Activated CD8-positive, alpha-beta T cell treated with anti-CD3 and anti-CD28 coated beads, Interleukin-2, amount 10 ng/mL, durations not matched to agents 7 days and 5 days (primary cell): ENCODE measurements at regions of chr1 and their contacts with region 1.

Region 1: GRCh38 chr1:45490626-45491486 is at the start of gene TESK2:
- DNase-seq: peak; percentile 98
- ATAC-seq: peak; percentile 99
- H3K4me3 Mint-ChIP-seq: no peak within 1 kb of the TSS
- H3K27ac Mint-ChIP-seq: no peak within 1 kb of the TSS
- H3K4me1 Mint-ChIP-seq: peaks cover 12% of the 10 kb centered on the region
- H3K27me3 Mint-ChIP-seq: peaks cover 5% of the 10 kb centered on the region
- total RNA-seq, gene TESK2: 3.3 to 3.5 TPM

Region 2: DNA sequence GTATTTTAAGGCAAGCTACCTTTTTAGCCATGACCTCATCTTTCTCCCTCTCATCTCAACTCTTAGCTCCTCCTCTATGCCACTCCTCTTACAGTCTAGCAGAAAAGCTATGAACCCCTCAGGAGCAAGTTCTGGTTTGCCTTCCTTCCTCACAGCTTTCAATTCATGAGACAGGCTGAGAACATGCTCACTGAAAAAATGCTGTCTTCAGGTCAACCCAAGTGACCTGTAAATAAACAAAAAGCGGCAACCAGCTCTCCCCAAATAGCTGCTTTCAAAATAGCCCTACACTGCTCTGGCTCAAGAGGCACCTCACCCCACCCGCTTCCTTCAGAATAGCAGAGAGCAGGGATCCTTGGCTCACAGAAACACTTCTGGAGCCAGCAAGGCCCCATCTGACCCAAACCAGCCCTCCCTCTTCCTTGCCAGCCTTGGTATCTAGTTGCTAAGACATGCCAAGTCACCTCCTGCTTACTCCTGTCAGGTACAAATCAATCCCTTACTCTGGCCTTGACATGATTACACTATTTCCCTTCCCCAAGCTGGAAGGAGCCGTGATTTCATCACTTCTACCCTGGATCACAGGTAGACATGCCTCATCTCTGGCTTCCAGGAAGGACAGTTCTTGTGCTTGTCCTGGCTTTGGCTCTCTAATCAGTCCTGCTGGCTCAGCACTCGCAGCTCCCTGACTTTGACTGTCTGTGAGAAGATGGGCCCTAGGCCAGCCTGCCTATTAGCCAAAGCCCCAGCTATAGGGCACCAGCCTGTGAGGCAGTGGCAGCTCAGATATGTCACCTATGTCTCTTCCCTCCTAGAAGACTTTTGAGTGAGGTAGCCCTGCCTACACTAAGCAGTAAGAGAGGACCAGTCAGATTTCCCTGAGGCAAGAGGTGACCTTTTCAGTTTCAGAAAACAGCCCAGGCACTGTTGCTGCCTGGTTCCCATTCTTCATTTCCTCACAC is 141.9 kb before region 1 on chr1:
- CTCF ChIA-PET with region 1: interaction called, 218 read pairs
- POLR2A ChIA-PET with region 1: interaction called, 3 read pairs
- DNase-seq: no peak
- ATAC-seq: no peak
- H3K4me3 Mint-ChIP-seq: no peak overlapping the region
- H3K27ac Mint-ChIP-seq: peak overlapping the region; percentile 60
- H3K4me1 Mint-ChIP-seq: peaks cover 27% of the 10 kb centered on the region
- H3K27me3 Mint-ChIP-seq: no peaks in the 10 kb centered on the region

Region 3: GRCh38 chr1:45785583-45785982 is 294.7 kb after region 1 on chr1:
- CTCF ChIA-PET with region 1: no interaction called
- POLR2A ChIA-PET with region 1: no interaction called
- DNase-seq: peak; percentile 77
- ATAC-seq: peak; percentile 100
- H3K4me3 Mint-ChIP-seq: peak overlapping the region; percentile 62
- H3K27ac Mint-ChIP-seq: peak overlapping the region; percentile 67
- H3K4me1 Mint-ChIP-seq: peaks cover 28% of the 10 kb centered on the region
- H3K27me3 Mint-ChIP-seq: peaks cover 43% of the 10 kb centered on the region

Region 4: DNA sequence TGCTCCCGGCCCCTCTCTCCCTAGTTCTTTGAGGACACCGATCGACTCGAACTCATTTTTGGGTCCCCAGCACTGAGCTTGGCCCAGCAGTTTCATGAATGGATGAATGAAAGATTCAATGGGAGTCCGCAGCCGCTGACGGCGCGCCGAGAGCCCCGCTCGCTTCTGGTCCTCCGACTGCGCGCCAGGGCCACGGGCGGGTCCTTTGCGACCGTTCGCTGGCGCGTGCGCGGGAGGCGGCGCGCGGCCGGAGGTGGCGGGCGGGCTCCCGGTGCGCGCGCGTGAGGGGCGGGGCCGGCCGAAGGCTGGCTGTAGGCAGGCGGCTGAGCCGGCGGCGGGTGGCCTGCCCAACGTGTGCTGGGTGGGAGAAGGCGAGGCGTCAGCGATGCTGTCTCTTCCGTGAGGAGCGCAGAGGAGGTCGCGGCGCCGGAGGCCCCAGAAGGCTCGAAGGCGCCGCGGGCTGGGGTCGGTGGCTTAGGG is 312.5 kb after region 1 on chr1 and contains the start of gene MAST2:
- CTCF ChIA-PET with region 1: no interaction called
- POLR2A ChIA-PET with region 1: no interaction called
- DNase-seq: peak; percentile 87
- ATAC-seq: peak; percentile 95
- H3K4me3 Mint-ChIP-seq: peak within 1 kb of the TSS; percentile 88
- H3K27ac Mint-ChIP-seq: peak within 1 kb of the TSS; percentile 85
- H3K4me1 Mint-ChIP-seq: peaks cover 33% of the 10 kb centered on the region
- H3K27me3 Mint-ChIP-seq: no peaks in the 10 kb centered on the region
- total RNA-seq, gene MAST2: 25.7 to 27.9 TPM